Transverse colon (tissue), 4 donors: ENCODE measurements at regions of chr16 and their contacts with region 1.

Region 1: GRCh38 chr16:77424871-77425604 is 9.8 kb downstream of the ADAMTS18 start:
- DNase-seq: no peak
- H3K4me3 ChIP-seq: no peak overlapping the region
- H3K27ac ChIP-seq: no peak overlapping the region
- H3K4me1 ChIP-seq: no peaks in the 10 kb centered on the region
- H3K27me3 ChIP-seq: no peaks in the 10 kb centered on the region
- CTCF ChIP-seq: no peak
- EP300 ChIP-seq: no peak
- POLR2A ChIP-seq: no peak

Region 2: DNA sequence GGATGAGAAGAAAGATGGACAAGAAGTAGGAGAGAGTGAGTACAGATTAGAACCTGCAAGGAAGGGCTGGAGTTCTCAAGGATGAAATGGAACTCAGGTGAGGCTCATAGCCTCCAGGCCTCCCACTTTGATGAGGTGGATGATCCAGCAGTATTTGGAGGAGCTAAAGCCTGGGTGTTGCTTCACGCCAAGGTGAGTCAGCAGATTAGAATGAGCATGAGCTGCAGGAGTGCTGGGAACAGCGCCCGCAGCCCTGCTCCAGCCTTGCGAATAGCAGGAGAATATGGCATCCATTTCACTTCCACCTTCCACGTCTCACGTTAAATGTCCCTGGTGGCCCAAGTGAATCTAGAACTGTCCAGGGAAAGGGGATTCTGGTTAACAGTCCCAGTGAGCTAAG is 1604.4 kb before region 1 on chr16:
- in situ Hi-C with region 1: no loop called
- intact Hi-C with region 1: loop called (anchors 5 kb)
- DNase-seq: no peak
- H3K4me3 ChIP-seq: no peak overlapping the region
- H3K27ac ChIP-seq: no peak overlapping the region
- H3K4me1 ChIP-seq: no peaks in the 10 kb centered on the region
- H3K27me3 ChIP-seq: no peaks in the 10 kb centered on the region
- CTCF ChIP-seq: no peak
- EP300 ChIP-seq: no peak
- POLR2A ChIP-seq: no peak